ENCODE measurements at regions of chr1 and their contacts with region 1.

Region 1: DNA sequence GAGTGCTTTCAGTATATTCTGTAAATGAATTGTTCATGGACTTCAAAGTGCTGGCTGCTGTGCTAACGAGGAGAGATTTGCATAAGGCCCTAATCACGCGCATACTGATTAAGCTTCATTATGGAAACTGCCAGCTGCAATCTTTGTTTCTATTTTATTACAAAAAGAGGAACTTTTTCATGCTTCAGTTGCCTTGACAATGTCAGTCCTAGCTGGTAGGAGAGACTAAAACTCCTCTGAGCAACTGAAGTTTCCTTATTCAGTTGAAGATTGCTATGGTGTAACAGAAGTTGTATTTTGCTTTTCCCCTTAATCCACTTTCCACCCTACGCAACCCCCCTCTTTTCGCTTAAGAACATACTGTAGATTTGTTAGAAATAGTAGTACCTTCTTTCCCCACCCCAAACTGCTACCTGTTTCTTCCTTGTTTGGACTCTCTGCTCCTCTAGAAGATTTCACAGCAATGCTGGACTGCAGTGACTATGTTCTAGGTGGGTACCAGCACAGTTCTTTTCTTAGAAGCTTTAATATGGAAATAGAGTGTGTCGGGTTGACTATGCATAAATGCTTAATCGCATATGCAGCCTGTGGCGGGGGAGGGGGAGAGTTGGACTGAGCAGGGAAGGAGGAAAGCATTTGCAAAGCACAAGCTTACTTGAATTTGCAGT is 108.3 kb downstream of the POU2F1 start:
- DNase-seq: no peak
- ATAC-seq: no peak
- H3K4me3 ChIP-seq: no peak overlapping the region
- H3K27ac ChIP-seq: no peak overlapping the region
- H3K4me1 ChIP-seq: no peaks in the 10 kb centered on the region
- H3K27me3 ChIP-seq: no peaks in the 10 kb centered on the region
- CTCF ChIP-seq: no peak

Region 2: GRCh38 chr1:167101754-167102153 is 227.2 kb before region 1 on chr1:
- CTCF ChIA-PET with region 1: no interaction called
- POLR2A ChIA-PET with region 1: interaction called, 10 read pairs
- in situ Hi-C with region 1: no loop called
- intact Hi-C with region 1: no loop called
- DNase-seq: no peak
- ATAC-seq: no peak
- H3K4me3 ChIP-seq: no peak overlapping the region
- H3K27ac ChIP-seq: no peak overlapping the region
- H3K4me1 ChIP-seq: peaks cover 5% of the 10 kb centered on the region
- H3K27me3 ChIP-seq: peaks cover 2% of the 10 kb centered on the region; the same call in 1 of the 2 replicates
- CTCF ChIP-seq: no peak

Region 3: GRCh38 chr1:167342846-167343245 is 13.9 kb after region 1 on chr1:
- CTCF ChIA-PET with region 1: no interaction called
- POLR2A ChIA-PET with region 1: no interaction called
- in situ Hi-C with region 1: no loop called
- intact Hi-C with region 1: no loop called
- DNase-seq: peak; percentile 4
- ATAC-seq: no peak; the same call in 1 of the 2 replicates
- H3K4me3 ChIP-seq: no peak overlapping the region
- H3K27ac ChIP-seq: no peak overlapping the region
- H3K4me1 ChIP-seq: no peaks in the 10 kb centered on the region
- H3K27me3 ChIP-seq: no peaks in the 10 kb centered on the region
- CTCF ChIP-seq: peak; percentile 31; the same call in 1 of the 2 replicates

Region 4: DNA sequence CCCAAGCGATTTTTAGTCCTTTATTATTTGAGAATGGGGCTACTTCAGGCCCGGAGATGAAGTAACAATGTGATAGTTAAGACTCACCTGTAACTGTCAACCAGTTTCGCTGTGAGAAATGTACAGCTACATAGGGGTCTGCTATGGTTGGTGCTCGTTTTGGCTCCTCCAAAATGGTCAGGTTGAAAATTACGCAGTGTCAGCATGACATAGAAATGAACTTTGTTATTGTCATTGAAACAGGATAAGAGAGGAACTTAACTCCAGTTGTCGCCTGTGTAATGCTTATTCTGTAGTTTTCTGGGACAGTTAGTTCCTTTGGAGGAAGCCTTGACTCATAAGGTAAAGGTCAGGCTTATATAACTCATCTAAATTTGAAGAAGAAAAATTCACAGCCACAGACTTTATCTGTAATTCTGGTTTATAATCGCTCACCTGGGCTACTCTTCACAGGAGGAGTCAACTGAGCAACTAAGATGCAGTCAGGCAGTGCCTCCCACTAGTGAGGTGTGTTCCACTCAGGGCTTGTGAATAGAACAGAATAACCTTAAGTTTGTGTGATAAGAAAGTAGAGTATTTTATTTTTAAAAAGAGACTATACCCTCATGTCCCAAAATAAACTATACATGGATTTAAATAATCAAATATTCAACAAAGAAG is 58.4 kb after region 1 on chr1:
- CTCF ChIA-PET with region 1: no interaction called
- POLR2A ChIA-PET with region 1: no interaction called
- in situ Hi-C with region 1: no loop called
- intact Hi-C with region 1: loop called (anchors 5 kb)
- DNase-seq: no peak
- ATAC-seq: no peak
- H3K4me3 ChIP-seq: no peak overlapping the region
- H3K27ac ChIP-seq: no peak overlapping the region
- H3K4me1 ChIP-seq: no peaks in the 10 kb centered on the region
- H3K27me3 ChIP-seq: no peaks in the 10 kb centered on the region
- CTCF ChIP-seq: no peak

Measured in Panc1 (cell line).